ENCODE measurements at regions of chr17 and their contacts with region 1.

Region 1: DNA sequence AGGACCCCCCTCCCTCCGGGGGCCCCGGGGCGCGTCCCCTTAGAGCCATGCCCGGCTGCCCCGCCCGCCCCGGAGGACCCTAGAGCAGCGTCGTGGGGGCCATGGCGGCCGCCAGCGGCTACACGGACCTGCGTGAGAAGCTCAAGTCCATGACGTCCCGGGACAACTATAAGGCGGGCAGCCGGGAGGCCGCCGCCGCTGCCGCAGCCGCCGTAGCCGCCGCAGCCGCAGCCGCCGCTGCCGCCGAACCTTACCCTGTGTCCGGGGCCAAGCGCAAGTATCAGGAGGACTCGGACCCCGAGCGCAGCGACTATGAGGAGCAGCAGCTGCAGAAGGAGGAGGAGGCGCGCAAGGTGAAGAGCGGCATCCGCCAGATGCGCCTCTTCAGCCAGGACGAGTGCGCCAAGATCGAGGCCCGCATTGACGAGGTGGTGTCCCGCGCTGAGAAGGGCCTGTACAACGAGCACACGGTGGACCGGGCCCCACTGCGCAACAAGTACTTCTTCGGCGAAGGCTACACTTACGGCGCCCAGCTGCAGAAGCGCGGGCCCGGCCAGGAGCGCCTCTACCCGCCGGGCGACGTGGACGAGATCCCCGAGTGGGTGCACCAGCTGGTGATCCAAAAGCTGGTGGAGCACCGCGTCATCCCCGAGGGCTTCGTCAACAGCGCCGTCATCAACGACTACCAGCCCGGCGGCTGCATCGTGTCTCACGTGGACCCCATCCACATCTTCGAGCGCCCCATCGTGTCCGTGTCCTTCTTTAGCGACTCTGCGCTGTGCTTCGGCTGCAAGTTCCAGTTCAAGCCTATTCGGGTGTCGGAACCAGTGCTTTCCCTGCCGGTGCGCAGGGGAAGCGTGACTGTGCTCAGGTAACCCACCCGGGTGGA is 759 bp downstream of the ALKBH5 start:
- DNase-seq: peak; percentile 57 to 82 (median 79)
- ATAC-seq: peak; percentile 3 to 4
- H3K4me3 ChIP-seq: peak overlapping the region; percentile 76
- H3K27ac ChIP-seq: peak overlapping the region; percentile 79
- H3K4me1 ChIP-seq: peaks cover 20% of the 10 kb centered on the region
- H3K27me3 ChIP-seq: no peaks in the 10 kb centered on the region

Region 2: DNA sequence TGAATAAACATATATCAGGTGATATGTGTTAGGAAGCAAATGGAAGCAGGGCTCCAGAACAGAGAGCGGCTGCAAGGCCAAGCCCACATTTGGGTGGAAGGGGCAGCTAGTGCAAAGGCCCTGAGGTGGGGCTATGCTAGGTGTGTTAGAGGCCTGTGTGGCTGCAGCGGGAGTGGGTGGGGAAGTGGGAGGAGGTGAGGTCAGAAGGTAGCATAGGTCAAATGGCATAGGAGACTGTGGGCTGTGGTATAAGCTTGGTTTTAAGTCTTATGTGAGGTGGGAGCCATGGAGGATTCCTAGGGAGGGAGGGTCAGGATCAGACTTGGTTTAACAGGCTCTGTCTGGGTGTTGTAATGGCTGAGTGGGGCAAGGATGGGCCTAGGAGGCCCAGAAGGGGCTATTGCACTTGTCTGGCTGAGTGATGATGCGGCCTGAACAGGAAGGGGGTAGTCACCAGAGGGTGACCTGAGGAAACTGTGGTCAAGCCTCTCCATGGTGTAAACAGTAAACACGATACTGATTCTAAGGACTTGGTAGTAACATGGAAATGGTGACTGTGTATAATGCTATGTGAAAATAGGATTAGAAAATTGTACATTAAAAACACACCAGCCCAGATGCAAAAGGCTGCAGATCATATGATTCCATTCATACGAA is 472.0 kb before region 1 on chr17:
- intact Hi-C with region 1: no loop called
- DNase-seq: peak in 1 of 3 donors; percentile 2
- ATAC-seq: no peak
- H3K4me3 ChIP-seq: no peak overlapping the region
- H3K27ac ChIP-seq: peak overlapping the region; percentile 37
- H3K4me1 ChIP-seq: peaks cover 14% of the 10 kb centered on the region
- H3K27me3 ChIP-seq: no peaks in the 10 kb centered on the region

Region 3: GRCh38 chr17:18141210-18141803 is 43.1 kb before region 1 on chr17:
- intact Hi-C with region 1: loop called in 1 of 4 experiments (anchors 5 kb)
- DNase-seq: peak in 1 of 3 donors; percentile 35
- ATAC-seq: peak in 1 of 2 donors; percentile 14
- H3K4me3 ChIP-seq: no peak overlapping the region
- H3K27ac ChIP-seq: no peak overlapping the region
- H3K4me1 ChIP-seq: no peaks in the 10 kb centered on the region
- H3K27me3 ChIP-seq: no peaks in the 10 kb centered on the region